Activated T-helper 1 cell treated with anti-CD3 and anti-CD28 coated beads, Interleukin-12 subunit alpha, Interleukin-12 subunit beta, Interleukin-2, Interleukin-4 antibody, amounts not matched to agents 30 ng/mL and 10 ng/mL and 1 ng/mL, durations not matched to agents 14 hours and 24 hours and 36 hours (primary cell): ENCODE measurements at regions of chr17 and their contacts with region 1.

Region 1: DNA sequence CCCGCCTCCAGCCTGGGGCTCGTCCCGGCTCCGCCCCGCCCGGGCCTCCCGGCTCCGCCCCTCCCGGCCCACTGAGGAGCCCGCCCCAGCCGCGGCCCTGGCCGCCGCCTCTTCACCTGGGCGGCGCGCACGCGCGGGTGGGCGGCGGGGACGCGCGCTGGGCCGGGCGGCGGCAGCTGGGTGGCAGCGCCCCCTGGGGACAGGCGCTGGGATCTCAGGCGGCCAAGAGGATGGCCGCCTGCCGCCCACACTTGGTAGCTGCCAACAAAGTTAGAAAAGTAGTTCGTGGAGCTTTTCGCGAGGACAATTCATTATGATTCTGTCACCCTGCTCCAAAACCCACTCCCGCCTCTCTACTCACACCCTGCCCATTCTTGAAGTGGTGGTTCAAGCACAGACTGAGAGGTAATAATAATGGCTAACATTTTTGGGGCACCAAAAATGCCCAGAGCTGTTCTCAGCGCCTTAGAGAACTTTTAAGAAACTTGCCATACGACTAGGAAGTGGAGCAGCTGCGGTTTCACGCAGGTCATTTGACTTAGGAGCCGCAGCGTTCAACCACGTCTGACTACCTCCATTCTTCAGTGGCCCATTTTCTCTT is 340 bp upstream of the MYO1D start:
- DNase-seq: peak; percentile 92
- H3K4me3 Mint-ChIP-seq: peak overlapping the region; percentile 66
- H3K27ac Mint-ChIP-seq: peak overlapping the region; percentile 37
- H3K4me1 Mint-ChIP-seq: peaks cover 21% of the 10 kb centered on the region
- H3K27me3 Mint-ChIP-seq: peaks cover 18% of the 10 kb centered on the region

Region 2: GRCh38 chr17:32444308-32445073 is 432.8 kb before region 1 on chr17 and contains the start of gene PSMD11:
- intact Hi-C with region 1: loop called (anchors 1 kb)
- DNase-seq: peak; percentile 98
- H3K4me3 Mint-ChIP-seq: peak within 1 kb of the TSS; percentile 94
- H3K27ac Mint-ChIP-seq: peak within 1 kb of the TSS; percentile 88
- H3K4me1 Mint-ChIP-seq: peaks cover 28% of the 10 kb centered on the region
- H3K27me3 Mint-ChIP-seq: peaks cover 5% of the 10 kb centered on the region
- total RNA-seq, gene PSMD11: 190 and 198 TPM in 2 replicates

Region 3: GRCh38 chr17:32755045-32755805 is 122.0 kb before region 1 on chr17:
- intact Hi-C with region 1: loop called (anchors 1 kb)
- DNase-seq: no peak
- H3K4me3 Mint-ChIP-seq: no peak overlapping the region
- H3K27ac Mint-ChIP-seq: no peak overlapping the region
- H3K4me1 Mint-ChIP-seq: peaks cover 5% of the 10 kb centered on the region
- H3K27me3 Mint-ChIP-seq: peaks cover 3% of the 10 kb centered on the region

Region 4: GRCh38 chr17:32783602-32784001 is 93.7 kb before region 1 on chr17:
- intact Hi-C with region 1: loop called (anchors 1 kb)
- DNase-seq: no peak
- H3K4me3 Mint-ChIP-seq: no peak overlapping the region
- H3K27ac Mint-ChIP-seq: no peak overlapping the region
- H3K4me1 Mint-ChIP-seq: no peaks in the 10 kb centered on the region
- H3K27me3 Mint-ChIP-seq: peaks cover 19% of the 10 kb centered on the region

Region 5: GRCh38 chr17:32909787-32910369 is 32.6 kb after region 1 on chr17:
- intact Hi-C with region 1: loop called (anchors 1 kb)
- DNase-seq: peak; percentile 41
- H3K4me3 Mint-ChIP-seq: no peak overlapping the region
- H3K27ac Mint-ChIP-seq: no peak overlapping the region
- H3K4me1 Mint-ChIP-seq: peaks cover 28% of the 10 kb centered on the region
- H3K27me3 Mint-ChIP-seq: peaks cover 5% of the 10 kb centered on the region

Region 6: DNA sequence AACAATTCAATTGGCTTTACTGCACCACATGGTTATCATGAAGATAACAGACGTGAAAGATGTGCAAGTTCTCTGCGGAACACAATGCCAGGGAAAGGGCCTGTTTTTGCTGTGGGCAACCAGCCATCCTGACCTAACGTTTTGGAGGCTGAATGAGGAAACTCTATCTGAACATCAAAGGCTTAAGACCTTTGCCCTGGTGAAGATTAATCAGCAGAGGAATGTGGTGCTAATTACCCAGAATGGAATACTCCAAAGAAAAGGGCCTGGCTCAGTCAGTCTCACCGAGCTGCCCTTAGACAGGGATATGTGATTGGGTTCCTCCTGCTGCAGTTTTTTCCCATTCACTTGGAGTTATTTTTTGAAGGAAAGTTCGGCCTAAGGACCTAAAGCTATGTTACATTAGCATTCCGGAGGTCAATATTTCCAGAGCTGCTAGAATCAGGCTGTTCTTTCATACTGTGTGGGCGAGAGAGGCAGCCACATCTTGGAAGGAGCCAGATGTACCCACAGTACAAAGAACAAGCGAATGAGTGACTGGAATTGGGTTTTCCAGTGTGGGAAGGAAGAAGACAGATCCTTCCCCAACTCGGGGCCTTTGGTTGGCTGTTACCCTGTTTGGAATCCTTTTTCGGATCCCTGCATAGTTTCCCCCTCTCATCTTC is 400.3 kb after region 1 on chr17:
- intact Hi-C with region 1: no loop called
- DNase-seq: no peak
- H3K4me3 Mint-ChIP-seq: no peak overlapping the region
- H3K27ac Mint-ChIP-seq: no peak overlapping the region
- H3K4me1 Mint-ChIP-seq: no peaks in the 10 kb centered on the region
- H3K27me3 Mint-ChIP-seq: peaks cover 3% of the 10 kb centered on the region